ENCODE measurements at regions of chr2 and their contacts with region 1.

Region 1: DNA sequence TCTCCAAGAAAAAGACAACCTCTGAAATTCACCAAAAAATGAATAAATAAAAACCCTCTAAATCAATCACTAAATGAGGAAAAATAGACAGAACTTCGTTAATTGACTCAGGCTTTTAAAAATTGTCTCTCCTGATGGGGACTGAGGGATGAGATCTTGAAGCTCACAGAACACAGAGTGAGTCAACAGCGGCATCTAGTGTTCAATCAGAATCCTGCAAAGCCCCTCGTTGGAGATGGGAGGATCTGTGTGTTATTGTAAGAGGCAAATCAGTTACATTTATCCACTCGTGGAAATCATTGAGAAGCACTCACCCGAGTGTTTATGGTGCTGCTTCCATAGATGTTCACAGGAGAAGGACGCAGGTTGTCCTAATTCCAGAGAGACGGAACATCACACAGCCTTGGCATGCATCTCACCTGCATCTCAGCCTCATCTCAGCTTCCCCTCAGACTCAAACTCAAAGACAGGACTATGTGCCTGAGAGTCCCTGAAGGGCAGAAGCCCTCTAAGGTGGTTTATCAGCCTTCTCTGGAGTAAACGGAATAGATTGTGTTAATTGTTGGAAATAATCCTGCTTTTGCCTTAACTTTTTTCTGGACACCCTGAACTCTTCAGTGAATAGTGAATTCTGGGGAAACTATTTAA is 82.0 kb downstream of the MREG start:
- DNase-seq: peak; percentile 60
- H3K4me3 Mint-ChIP-seq: no peak overlapping the region
- H3K27ac Mint-ChIP-seq: no peak overlapping the region
- H3K4me1 Mint-ChIP-seq: peaks cover 15% of the 10 kb centered on the region
- H3K27me3 Mint-ChIP-seq: peaks cover 8% of the 10 kb centered on the region

Region 2: DNA sequence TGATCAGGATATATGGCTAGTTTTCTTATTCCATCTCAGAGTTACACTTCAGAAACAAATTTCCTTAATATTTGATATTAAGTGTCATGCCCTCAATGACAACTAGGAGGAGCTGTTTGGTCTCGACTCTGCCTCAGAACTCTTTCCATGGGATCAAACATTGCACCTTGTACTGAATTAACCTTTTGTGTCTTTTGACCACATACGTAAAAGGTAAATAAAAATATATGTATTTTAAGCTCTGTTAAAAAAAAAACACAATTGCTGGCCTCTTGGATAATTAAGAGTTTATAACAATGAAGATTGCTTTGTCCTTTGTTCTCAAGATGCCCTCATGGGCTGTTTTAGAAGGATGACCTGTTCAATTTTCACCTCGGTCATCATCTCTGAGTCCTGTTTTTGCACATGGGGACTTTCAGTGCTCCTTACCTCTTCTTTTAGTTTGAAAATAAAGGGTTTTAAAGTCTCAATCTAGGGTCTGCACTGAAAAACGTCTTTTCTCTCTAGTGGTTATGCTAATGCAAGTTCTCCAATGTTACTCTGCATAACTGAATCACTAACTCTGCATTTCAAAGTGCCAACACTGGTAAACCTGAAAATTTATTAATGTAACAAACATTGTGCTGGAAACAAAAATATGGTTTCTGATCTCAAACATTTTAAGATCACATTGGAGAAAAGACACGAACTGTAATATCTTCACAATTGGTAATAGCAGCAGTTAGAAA is 476.7 kb before region 1 on chr2:
- CTCF ChIA-PET with region 1: interaction called, 12 read pairs
- POLR2A ChIA-PET with region 1: no interaction called
- DNase-seq: no peak
- H3K4me3 Mint-ChIP-seq: no peak overlapping the region
- H3K27ac Mint-ChIP-seq: no peak overlapping the region
- H3K4me1 Mint-ChIP-seq: no peaks in the 10 kb centered on the region
- H3K27me3 Mint-ChIP-seq: peaks cover 25% of the 10 kb centered on the region

Region 3: DNA sequence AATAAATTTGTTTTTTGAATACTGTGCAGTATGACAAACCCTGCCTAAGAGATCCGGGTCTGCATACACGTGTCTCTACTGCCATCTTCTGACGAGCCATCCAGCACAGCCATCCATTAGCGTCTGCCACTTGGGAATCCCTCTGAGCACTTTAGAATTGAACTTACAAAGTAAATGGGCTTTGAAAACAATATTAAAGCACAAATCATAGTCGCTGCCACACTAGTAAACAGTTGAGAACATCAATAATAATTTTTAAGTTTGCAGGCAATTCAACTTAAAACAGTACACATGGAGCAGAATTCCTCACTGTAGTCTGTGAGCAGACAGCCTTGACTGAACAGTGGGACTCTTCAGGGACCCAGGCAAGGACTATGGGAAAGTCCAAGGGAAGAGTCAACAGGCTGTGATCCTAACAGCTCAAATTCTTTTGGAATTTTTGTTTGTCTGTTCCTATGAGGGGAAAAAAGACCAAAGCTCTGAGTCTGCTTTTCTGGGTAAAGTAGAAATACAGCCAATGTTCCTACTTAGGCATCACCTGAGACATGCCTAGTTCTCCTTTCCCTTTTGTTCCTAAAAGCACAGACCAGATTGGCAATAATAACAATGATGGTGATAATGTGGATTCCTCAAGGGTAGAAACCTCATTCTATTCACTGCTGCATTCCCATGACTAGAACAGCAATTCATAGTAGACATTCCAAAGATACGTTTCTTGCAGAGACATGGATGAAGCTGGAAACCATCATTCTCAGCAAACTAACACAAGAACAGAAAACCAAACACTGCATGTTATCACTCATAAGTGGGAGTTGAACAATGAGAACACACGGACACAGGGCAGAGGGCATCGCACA is 10.9 kb before region 1 on chr2:
- CTCF ChIA-PET with region 1: interaction called, 11 read pairs
- POLR2A ChIA-PET with region 1: no interaction called
- DNase-seq: peak; percentile 63
- H3K4me3 Mint-ChIP-seq: no peak overlapping the region
- H3K27ac Mint-ChIP-seq: no peak overlapping the region
- H3K4me1 Mint-ChIP-seq: peaks cover 23% of the 10 kb centered on the region
- H3K27me3 Mint-ChIP-seq: peaks cover 8% of the 10 kb centered on the region

Measured in activated CD4-positive, alpha-beta memory T cell treated with anti-CD3 and anti-CD28 coated beads, Interleukin-2, amount 10 ng/mL, durations not matched to agents 7 days and 5 days (primary cell).